ENCODE measurements at regions of chr3 and their contacts with region 1.

Region 1: GRCh38 chr3:138381950-138382688 is 33.7 kb downstream of the MRAS start:
- DNase-seq: peak in 7 of 10 donors; percentile 34 to 91 (median 49)

Region 2: GRCh38 chr3:136949708-136950107 is 1432.4 kb before region 1 on chr3:
- intact Hi-C with region 1: no loop called
- DNase-seq: no peak

Region 3: DNA sequence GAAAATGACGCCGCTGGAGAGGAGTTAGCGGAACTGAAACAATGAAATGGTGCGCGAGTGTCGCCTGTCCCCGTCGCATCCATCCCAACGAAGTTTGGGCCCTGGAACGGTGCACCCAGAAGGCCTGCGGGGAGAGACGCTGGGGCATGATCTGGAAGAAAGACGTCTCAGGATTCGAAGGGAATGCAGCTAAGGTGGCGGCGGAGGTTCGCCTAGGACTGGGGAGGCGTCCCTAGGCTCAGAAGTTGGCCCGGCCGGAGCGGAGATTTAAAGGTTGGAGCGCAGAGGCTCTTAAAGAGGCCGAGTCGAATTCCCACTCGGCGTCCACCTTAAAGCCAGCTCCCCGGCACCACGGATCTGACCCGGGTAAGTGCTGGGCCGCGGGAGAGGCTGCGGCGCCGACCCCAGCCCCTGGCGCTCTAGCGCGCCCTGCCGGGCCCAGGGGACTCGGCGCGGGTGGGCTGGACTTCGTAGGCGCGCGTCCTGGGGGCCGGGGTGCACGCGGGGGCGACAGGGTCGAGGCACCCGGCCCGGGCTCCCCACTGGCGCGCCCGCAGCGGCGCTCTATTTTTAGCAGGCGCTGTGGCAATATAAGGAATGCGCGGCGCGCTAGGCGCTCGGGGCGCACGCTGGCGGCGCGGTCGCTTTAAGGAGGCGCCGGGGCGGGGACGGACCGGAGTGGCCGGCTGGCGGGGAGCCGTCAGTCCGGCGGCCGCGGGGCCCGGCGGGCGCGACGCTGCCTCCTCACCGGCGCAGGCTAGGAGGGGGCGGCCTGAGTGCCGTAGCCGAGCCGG is 34.0 kb before region 1 on chr3 and contains the start of gene MRAS:
- intact Hi-C with region 1: loop called (anchors 5 kb)
- DNase-seq: peak; percentile 52 to 93 (median 68)